Heart left ventricle (tissue), 16 donors: ENCODE measurements at regions of chr6 and their contacts with region 1.

Region 1: DNA sequence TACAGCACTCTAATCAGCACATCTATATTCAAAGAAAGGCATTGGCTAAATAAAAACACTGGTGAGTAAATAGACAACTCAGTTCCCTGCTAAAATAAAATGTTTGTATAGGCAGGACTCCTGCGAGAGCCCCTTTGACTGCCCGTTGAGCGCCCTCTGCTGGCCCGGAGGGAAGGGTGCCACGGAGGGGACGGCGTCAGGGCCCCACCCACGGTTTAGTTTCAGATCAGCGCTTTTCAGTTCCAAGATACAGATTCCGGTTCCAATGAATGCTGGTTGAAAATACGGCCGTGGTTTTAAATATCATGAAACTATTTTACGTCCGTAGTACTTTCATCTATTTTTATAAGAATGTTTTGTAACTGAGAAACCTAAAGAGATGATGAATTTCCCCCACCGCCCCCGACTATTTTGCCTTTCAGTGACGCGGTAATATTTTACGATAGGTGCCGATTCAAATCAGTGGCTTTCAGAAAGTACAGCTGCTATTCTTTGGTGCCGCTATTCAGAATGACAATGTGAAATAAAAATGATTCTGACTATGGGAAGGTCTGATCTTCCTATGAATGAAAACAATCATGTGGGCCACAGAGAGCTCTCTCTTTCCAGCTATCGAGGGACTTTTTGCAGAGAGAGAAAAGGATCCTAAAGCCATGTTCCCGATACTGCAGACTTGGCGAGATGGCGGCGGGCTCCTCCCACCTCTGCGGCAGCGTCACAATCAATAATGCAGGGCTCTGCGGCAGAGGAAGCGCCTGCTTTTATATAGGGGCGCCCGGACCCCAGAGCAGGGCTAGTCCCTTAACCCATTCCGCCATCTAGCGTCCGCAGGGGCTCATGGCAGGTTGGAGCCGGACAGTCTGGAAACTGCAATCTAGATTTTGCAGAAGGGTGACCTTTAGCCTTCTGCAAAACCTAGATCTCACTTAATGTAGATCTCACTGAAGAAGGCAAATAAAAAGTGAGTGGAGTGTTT is 10.6 kb upstream of the CCN6 start:
- DNase-seq: peak; percentile 83 to 93 (median 89)
- ATAC-seq: peak; percentile 89 to 95 (median 94)
- H3K4me3 ChIP-seq: peak overlapping the region; percentile 12 to 77 (median 60)
- H3K27ac ChIP-seq: peak overlapping the region; percentile 21 to 87 (median 70)
- H3K4me1 ChIP-seq: peaks cover 0 to 20% (median 3%) of the 10 kb centered on the region in 12 donors
- H3K27me3 ChIP-seq: no peaks in the 10 kb centered on the region
- CTCF ChIP-seq: peak; percentile 91 to 99 (median 94)
- POLR2A ChIP-seq: no peak

Region 2: GRCh38 chr6:111011360-111012142 is 1031.8 kb before region 1 on chr6:
- intact Hi-C with region 1: loop called in 3 of 10 experiments (anchors 5 to 10 kb)
- DNase-seq: no peak
- ATAC-seq: peak in 3 of 4 donors; percentile 59 to 68 (median 65)
- H3K4me3 ChIP-seq: no peak overlapping the region
- H3K27ac ChIP-seq: no peak overlapping the region
- H3K4me1 ChIP-seq: peaks cover 0 to 7% (median 0%) of the 10 kb centered on the region in 12 donors
- H3K27me3 ChIP-seq: no peaks in the 10 kb centered on the region
- CTCF ChIP-seq: peak; percentile 23 to 70 (median 52)
- POLR2A ChIP-seq: no peak

Region 3: DNA sequence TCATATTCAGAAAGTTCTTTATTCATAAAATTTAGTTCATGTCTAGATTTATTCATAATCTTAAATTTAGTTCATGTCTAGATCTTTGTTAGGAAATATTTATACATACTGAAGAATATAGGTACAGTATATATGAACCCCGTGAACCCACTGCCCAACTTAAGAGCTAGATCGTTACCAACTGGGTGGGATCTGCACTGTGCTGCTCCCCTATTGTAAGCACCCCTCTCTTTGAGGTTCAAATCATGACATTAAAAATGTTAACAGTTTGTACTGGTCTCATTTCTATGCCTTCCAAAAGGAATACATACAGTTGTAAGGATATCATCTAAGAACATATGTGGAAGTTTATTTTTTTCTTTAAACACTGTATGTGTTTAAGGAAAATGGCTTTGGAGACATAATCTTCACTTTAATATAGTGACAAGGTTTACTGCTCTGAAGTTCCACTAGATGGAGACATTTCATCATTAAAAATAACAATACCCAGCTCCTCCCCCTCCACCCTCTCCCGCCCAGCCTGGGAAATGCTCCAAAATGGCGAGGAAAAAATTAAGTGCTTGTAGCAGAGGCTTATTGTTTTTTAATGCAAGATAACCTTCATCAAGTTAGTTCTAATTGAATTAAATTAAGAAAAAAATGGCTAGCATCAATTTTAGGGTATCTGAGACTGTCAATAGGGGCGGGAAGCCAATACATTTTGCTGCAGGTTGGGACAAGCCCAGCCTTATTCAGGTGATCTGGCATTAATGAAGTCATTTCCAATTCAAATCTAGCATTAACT is 333.5 kb before region 1 on chr6:
- intact Hi-C with region 1: loop called (anchors 1 to 2 kb)
- DNase-seq: peak; percentile 59 to 83 (median 66)
- ATAC-seq: peak; percentile 56 to 79 (median 75)
- H3K4me3 ChIP-seq: peak overlapping the region in 4 of 12 donors; percentile 13 to 29 (median 16)
- H3K27ac ChIP-seq: peak overlapping the region in 11 of 12 donors; percentile 22 to 66 (median 48)
- H3K4me1 ChIP-seq: peaks cover 3 to 45% (median 31%) of the 10 kb centered on the region in 12 donors
- H3K27me3 ChIP-seq: no peaks in the 10 kb centered on the region
- CTCF ChIP-seq: peak; percentile 66 to 88 (median 78)
- POLR2A ChIP-seq: no peak

Region 4: DNA sequence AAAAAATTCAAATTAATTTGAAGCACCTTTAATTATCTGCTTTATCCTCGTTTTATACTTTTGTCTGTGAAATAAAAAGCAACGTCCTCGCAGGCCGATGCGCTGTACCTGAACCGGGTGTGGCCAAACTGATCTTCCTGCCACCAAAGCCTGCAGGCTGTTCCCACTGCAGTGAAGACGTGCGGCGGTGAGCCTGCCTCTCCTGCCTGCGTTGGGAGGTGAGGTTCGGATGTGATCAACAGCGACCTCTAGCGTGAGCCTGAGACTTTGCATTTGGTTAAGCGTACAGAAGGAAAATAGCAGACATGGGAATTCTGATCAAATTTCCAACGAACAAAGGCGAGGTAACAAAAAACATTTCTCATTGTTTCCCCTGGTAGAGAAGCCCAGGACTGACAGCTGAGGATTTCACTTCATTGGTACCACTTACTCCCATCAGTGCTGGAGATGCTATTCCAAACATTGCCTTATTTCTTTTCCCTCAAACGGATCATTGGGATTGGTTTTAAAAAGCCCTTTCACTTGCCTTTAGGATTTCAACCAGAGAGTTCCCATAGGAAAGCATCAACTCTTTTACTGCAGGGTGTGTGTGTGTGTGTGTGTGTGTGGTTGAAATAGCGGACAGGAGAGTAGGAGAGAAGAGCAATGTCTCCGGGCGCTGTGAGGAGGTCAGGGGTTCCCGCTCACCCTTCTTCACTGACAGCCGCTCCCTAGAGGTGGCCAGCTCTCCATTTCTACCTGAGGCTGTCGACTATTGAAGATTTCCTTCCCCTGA is 46.1 kb before region 1 on chr6:
- intact Hi-C with region 1: loop called in 7 of 10 experiments (anchors 2 to 10 kb)
- DNase-seq: peak; percentile 80 to 91 (median 85)
- ATAC-seq: peak; percentile 70 to 94 (median 92)
- H3K4me3 ChIP-seq: peak overlapping the region in 10 of 12 donors; percentile 1 to 42 (median 23)
- H3K27ac ChIP-seq: peak overlapping the region in 7 of 12 donors; percentile 22 to 57 (median 45)
- H3K4me1 ChIP-seq: peaks cover 0 to 12% (median 4%) of the 10 kb centered on the region in 12 donors
- H3K27me3 ChIP-seq: no peaks in the 10 kb centered on the region
- CTCF ChIP-seq: peak; percentile 81 to 94 (median 91)
- POLR2A ChIP-seq: no peak